Activated naive CD8-positive, alpha-beta T cell treated with anti-CD3 and anti-CD28 coated beads, Interleukin-2, amount 10 ng/mL, durations not matched to agents 7 days and 5 days (primary cell): ENCODE measurements at regions of chr17 and their contacts with region 1.

Region 1: DNA sequence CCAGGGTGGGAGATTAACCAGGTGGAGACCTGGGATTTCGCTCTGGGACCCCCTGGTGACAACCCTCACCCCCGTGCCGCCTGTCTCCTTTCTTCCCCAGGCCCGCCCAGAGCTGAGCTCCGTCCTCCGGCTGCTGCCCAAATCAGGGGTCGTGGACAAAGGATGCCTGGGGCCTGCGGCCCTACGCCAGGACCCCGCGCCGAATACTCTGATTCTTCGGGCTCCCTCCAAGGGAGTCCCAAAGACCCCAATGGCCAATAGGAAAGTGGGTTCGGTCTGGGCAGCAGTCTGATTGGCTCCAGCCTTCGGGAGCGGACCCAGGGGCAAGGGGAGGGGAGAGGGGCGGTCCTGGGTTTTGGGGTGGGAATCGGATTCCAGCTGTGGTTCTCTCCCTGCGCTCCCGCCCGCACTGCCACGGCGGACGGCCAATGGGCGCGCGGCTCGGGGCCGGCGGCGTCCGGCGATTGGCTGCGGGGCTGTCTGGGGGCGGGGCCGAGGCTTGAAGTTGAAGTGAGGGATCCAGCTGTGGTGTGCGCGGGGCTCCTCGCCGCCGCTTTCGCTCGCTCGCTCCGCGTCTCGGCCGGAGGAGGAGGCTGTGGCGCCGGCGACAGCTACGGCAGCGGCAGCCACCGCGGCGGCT is at the start of gene CACNA1G:
- DNase-seq: peak; percentile 90
- ATAC-seq: peak; percentile 90
- H3K4me3 Mint-ChIP-seq: peak within 1 kb of the TSS; percentile 80
- H3K27ac Mint-ChIP-seq: no peak within 1 kb of the TSS
- H3K4me1 Mint-ChIP-seq: peaks cover 14% of the 10 kb centered on the region
- H3K27me3 Mint-ChIP-seq: peaks cover 63% of the 10 kb centered on the region
- total RNA-seq, gene CACNA1G: 0.11 TPM in 1 of 2 experiments, not detected in the other

Region 2: DNA sequence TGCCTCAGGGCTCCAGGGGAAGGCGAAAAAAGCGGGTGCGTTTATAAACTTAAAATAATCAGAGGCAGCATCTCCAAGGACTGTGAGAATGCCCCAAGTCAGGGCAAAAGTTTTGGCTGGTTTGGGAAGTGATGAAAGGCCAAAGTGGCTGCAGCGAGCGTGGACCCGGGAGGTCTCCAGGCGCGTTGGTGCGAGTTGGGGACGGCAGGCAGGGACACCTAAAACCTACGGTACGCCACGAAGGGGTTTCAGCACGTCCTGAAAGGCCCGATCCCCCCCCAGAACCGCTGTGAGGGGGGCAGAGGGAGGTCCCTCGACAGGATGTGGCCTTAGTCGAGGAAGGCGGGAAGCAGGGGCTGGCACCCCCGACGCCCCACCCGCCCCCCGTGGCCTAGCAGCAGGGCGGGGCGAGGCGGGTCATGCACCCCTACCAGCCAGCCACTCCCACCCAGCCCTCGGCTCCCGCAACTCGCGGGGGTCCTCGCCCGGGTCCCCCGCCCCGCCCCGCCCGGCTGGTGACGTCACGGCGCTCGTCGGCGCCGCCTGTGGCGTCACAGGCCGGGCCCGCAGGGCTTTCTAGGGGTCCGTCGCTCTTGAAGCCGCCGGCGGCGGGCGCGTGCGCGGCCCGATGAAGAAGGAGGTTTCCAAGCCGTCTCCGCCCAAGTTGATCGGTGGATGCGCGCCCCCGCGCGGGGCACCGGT is 52.3 kb before region 1 on chr17 and contains the start of gene MYCBPAP:
- POLR2A ChIA-PET with region 1: no interaction called
- DNase-seq: peak; percentile 85
- ATAC-seq: peak; percentile 72
- H3K4me3 Mint-ChIP-seq: peak within 1 kb of the TSS; percentile 91
- H3K27ac Mint-ChIP-seq: peak within 1 kb of the TSS; percentile 94
- H3K4me1 Mint-ChIP-seq: peaks cover 37% of the 10 kb centered on the region
- H3K27me3 Mint-ChIP-seq: peaks cover 10% of the 10 kb centered on the region
- total RNA-seq, gene MYCBPAP: 4.0 to 4.4 TPM

Region 3: GRCh38 chr17:50541716-50542688 is 18.3 kb before region 1 on chr17:
- POLR2A ChIA-PET with region 1: interaction called, 10 read pairs
- DNase-seq: peak; percentile 94
- ATAC-seq: peak; percentile 84
- H3K4me3 Mint-ChIP-seq: peak overlapping the region; percentile 80
- H3K27ac Mint-ChIP-seq: peak overlapping the region; percentile 47
- H3K4me1 Mint-ChIP-seq: peaks cover 17% of the 10 kb centered on the region
- H3K27me3 Mint-ChIP-seq: peaks cover 15% of the 10 kb centered on the region